ENCODE measurements at regions of chrX and their contacts with region 1.

Region 1: GRCh38 chrX:74015379-74016019 is 288.5 kb upstream of the ZCCHC13 start:
- DNase-seq: peak; percentile 53 to 80 (median 60)
- ATAC-seq: peak; percentile 91
- H3K4me3 ChIP-seq: no peak overlapping the region
- H3K27ac ChIP-seq: no peak overlapping the region
- H3K4me1 ChIP-seq: no peaks in the 10 kb centered on the region
- H3K27me3 ChIP-seq: no peaks in the 10 kb centered on the region
- CTCF ChIP-seq: peak; percentile 70 to 75 (median 73)
- EP300 ChIP-seq: no peak
- POLR2A ChIP-seq: no peak
- RAD21 ChIP-seq: peak; percentile 30 to 83; a peak in 3 of 4 replicates

Region 2: GRCh38 chrX:73922856-73923455 is 92.5 kb before region 1 on chrX:
- CTCF ChIA-PET with region 1: no interaction called
- POLR2A ChIA-PET with region 1: no interaction called
- in situ Hi-C with region 1: no loop called
- intact Hi-C with region 1: loop called (anchors 10 kb)
- DNase-seq: no peak
- ATAC-seq: no peak
- H3K4me3 ChIP-seq: no peak overlapping the region
- H3K27ac ChIP-seq: no peak overlapping the region
- H3K4me1 ChIP-seq: no peaks in the 10 kb centered on the region
- H3K27me3 ChIP-seq: no peaks in the 10 kb centered on the region
- CTCF ChIP-seq: no peak
- EP300 ChIP-seq: no peak
- POLR2A ChIP-seq: no peak
- RAD21 ChIP-seq: no peak

Region 3: DNA sequence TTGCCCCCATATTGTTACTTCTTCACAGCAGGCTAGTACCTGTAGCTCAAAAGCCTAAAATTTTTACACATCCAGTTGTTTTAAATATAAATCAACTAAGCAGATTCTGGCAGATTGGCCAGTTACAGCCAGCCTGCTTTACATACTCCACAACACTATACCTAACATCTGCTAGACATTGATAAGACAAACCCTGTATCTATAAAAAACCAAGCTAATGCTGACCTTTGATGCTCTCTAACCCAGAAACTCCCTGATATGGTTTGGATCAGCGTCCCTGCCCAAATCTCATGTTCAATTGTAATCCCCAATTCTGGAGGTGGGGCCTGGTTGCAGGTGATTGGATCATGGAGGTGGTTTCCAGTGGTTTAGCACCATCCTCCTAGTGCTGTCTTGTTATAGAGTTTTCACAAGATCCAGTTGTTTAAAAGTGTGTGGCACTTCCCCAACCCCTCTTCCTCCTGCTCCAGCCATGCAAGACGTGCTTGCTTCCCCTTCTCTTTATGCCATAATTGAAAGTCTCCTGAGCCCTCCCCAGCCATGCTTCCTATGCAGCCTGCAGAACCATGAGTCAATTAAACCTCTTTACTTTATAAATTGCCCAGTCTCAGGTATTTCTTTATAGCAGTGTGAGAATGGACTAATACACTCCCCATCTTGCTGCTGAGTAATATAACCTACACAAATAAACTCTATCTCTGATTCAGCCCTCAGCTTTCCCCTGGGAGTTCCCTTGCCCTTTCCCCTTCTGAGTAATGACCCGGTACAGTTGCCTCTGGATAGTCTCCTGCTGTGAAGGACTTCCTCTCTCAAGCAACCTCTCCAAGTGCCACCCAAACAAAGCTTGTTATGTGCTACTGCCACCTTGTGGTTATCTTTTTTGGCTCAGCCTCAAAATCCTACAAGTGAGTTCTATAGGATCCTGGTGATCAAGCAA is 328.1 kb after region 1 on chrX:
- CTCF ChIA-PET with region 1: no interaction called
- POLR2A ChIA-PET with region 1: no interaction called
- in situ Hi-C with region 1: no loop called
- intact Hi-C with region 1: loop called (anchors 5 kb)
- DNase-seq: peak; percentile 24 to 78 (median 40)
- ATAC-seq: peak; percentile 95
- H3K4me3 ChIP-seq: no peak overlapping the region
- H3K27ac ChIP-seq: no peak overlapping the region
- H3K4me1 ChIP-seq: peaks cover 0 to 4% of the 10 kb centered on the region in 2 experiments; a peak in 1 of 5 replicates
- H3K27me3 ChIP-seq: no peaks in the 10 kb centered on the region
- CTCF ChIP-seq: peak; percentile 52 to 64 (median 63); a peak in 5 of 6 replicates
- EP300 ChIP-seq: no peak
- POLR2A ChIP-seq: no peak
- RAD21 ChIP-seq: peak; percentile 48 to 75; a peak in 3 of 4 replicates